Dendritic cell treated with granulocyte-macrophage colony-stimulating factor and Interleukin-4, amounts not matched to agents 40 ng/mL and 50 ng/mL, for 4 days (primary cell): ENCODE measurements at regions of chr16 and their contacts with region 1.

Region 1: GRCh38 chr16:27690608-27691007 is 140.7 kb downstream of the KATNIP start:
- H3K4me3 Mint-ChIP-seq: no peak overlapping the region
- H3K27ac Mint-ChIP-seq: no peak overlapping the region
- H3K4me1 Mint-ChIP-seq: no peaks in the 10 kb centered on the region
- H3K27me3 Mint-ChIP-seq: no peaks in the 10 kb centered on the region

Region 2: GRCh38 chr16:27665881-27666280 is 24.7 kb before region 1 on chr16:
- intact Hi-C with region 1: no loop called
- H3K4me3 Mint-ChIP-seq: no peak overlapping the region
- H3K27ac Mint-ChIP-seq: no peak overlapping the region
- H3K4me1 Mint-ChIP-seq: peaks cover 5% of the 10 kb centered on the region
- H3K27me3 Mint-ChIP-seq: no peaks in the 10 kb centered on the region

Region 3: DNA sequence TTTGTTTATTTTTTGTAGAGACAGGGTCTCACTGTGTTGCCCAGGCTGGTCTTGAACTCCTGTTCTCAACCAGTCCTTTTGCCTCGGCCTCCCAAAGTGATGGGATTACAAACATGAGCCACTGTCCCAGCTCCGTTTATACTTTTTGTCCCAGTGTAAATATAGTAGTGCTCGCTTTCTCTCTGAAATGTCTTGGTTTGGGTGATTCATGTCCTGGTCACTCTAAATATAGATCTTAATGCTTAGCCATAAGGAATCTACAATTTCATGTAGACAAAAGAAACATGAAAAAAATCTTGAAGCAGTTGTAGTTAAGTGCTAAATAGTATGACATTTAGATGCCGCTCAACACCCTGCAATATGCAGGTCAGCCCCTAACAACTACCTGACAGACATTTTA is 13.8 kb before region 1 on chr16:
- intact Hi-C with region 1: no loop called
- H3K4me3 Mint-ChIP-seq: no peak overlapping the region
- H3K27ac Mint-ChIP-seq: no peak overlapping the region
- H3K4me1 Mint-ChIP-seq: no peaks in the 10 kb centered on the region
- H3K27me3 Mint-ChIP-seq: no peaks in the 10 kb centered on the region

Region 4: DNA sequence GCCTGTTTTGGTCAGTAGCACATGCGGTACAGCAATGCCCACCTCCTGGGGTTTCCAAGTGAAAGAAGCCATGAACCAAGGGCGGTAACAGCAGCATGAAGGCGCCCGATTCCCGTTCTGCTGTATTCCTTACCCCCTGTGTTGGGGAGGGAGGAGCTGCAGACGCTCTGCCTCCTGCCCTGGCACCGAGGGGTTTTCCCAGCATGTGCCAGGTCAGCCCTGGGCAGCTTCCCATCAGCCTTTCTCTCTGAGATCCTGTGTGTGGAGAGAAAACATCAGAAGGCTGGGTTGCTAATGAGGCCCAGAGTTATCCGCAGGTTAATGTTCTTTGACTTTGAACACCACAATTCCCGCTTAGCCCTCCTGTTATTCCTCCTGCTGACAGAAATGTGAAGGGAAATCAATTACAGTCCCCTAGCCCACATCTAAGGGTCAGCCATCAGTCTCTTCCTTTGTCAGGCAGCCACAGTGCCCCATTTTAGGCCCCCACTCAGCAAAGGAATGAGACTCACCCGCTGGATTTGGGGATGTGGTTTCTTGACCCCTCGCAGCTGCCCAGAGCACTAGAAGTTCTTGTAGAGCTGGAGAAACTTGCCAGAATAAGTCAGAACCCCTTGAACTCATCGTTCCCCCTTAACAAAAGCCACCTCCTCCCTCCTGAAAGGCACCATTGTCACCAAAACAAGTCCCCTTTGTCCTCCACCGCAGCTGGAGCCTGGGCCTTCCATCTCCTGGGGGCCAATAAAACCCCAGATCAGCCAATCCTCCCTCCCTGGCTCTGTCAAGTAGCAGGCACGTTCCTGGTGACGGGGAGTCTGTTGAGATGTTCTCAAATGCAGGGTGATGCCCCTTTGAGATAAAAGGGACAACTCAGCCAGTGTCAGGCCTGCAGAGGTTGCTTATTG is 27.8 kb after region 1 on chr16:
- intact Hi-C with region 1: no loop called
- H3K4me3 Mint-ChIP-seq: no peak overlapping the region
- H3K27ac Mint-ChIP-seq: no peak overlapping the region
- H3K4me1 Mint-ChIP-seq: no peaks in the 10 kb centered on the region
- H3K27me3 Mint-ChIP-seq: no peaks in the 10 kb centered on the region

Region 5: DNA sequence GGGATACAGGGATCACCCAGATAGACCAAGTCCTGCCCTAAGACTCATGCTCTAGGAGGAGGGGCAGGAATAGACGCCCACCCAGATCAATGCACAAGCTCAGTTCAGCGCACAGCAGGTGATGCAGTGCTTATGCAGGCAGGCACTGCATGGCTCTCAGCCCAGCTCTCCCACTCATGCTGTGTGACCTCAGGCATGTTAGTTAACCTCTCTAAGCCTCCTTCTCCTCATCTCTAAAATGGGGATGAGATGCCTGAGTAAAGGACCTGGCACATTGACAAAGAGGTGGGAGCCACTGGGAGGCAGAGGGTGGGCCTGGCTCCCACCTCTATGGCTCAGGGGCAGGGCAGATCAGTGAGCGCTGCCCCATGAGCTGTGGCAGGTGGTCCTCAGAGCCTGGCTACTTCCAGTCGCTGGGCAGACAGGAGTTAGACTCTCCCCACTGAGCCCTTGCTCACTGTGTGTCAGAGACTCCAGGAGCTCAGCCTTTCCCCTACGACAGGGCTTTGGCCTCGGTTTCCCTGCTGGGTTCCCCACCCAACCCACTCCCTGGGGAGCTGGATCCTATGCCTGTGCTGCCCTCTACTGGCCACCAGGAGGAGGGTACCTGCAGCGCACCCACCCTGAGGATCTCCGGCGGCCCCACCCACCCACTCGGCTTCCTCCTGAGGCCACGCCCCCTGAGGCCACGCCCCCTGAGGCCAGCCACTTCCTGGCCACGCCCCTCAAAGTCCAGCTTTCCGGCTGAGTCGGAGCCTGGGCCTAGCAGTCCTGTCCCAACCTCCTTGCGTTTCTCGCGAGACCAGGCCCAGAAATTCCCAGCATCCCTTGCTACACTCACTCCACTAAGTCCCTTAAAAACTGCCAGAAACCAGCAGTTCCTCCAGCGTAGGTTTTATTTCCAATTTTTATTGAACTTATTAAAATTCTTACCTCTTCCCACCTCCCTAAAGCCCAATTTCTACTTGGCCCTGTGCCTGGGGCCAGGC is 176.8 kb after region 1 on chr16:
- intact Hi-C with region 1: loop called (anchors 10 kb)
- H3K4me3 Mint-ChIP-seq: no peak overlapping the region
- H3K27ac Mint-ChIP-seq: no peak overlapping the region
- H3K4me1 Mint-ChIP-seq: no peaks in the 10 kb centered on the region
- H3K27me3 Mint-ChIP-seq: no peaks in the 10 kb centered on the region

Region 6: GRCh38 chr16:28069971-28070794 is 379.6 kb after region 1 on chr16:
- intact Hi-C with region 1: loop called (anchors 2 kb)
- H3K4me3 Mint-ChIP-seq: no peak overlapping the region
- H3K27ac Mint-ChIP-seq: no peak overlapping the region
- H3K4me1 Mint-ChIP-seq: no peaks in the 10 kb centered on the region
- H3K27me3 Mint-ChIP-seq: peaks cover 17% of the 10 kb centered on the region